ENCODE measurements at regions of chr2 and their contacts with region 1.

Region 1: DNA sequence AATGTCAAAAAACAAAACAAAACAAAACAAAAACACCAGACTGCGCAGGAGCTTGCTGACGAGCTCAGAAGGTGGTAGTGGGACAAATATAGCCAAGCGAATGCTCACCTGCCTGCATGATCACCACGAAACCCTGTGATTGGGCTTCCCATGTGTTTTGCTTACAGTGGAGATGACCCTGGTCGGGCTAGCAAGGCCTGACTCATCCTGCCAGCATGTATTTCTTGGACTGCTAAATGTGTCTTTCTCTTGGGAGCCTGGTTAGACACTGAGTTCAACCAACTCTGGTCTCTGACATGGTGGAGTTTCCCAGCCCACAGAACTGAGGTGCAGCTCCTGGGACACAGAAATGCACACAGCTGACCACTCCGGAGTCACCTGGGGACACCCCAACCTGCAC is 30.7 kb upstream of the DUSP2 start:
- DNase-seq: no peak
- H3K4me3 ChIP-seq: no peak overlapping the region
- H3K27ac ChIP-seq: no peak overlapping the region
- H3K4me1 ChIP-seq: peaks cover 4 to 23% (median 8%) of the 10 kb centered on the region in 6 donors
- H3K27me3 ChIP-seq: no peaks in the 10 kb centered on the region
- CTCF ChIP-seq: no peak
- POLR2A ChIP-seq: no peak

Region 2: GRCh38 chr2:96065381-96065930 is 110.5 kb before region 1 on chr2:
- intact Hi-C with region 1: no loop called
- DNase-seq: no peak
- H3K4me3 ChIP-seq: no peak overlapping the region
- H3K27ac ChIP-seq: no peak overlapping the region
- H3K4me1 ChIP-seq: peaks cover 0 to 15% (median 4%) of the 10 kb centered on the region in 6 donors
- H3K27me3 ChIP-seq: no peaks in the 10 kb centered on the region
- CTCF ChIP-seq: no peak
- POLR2A ChIP-seq: no peak

Region 3: DNA sequence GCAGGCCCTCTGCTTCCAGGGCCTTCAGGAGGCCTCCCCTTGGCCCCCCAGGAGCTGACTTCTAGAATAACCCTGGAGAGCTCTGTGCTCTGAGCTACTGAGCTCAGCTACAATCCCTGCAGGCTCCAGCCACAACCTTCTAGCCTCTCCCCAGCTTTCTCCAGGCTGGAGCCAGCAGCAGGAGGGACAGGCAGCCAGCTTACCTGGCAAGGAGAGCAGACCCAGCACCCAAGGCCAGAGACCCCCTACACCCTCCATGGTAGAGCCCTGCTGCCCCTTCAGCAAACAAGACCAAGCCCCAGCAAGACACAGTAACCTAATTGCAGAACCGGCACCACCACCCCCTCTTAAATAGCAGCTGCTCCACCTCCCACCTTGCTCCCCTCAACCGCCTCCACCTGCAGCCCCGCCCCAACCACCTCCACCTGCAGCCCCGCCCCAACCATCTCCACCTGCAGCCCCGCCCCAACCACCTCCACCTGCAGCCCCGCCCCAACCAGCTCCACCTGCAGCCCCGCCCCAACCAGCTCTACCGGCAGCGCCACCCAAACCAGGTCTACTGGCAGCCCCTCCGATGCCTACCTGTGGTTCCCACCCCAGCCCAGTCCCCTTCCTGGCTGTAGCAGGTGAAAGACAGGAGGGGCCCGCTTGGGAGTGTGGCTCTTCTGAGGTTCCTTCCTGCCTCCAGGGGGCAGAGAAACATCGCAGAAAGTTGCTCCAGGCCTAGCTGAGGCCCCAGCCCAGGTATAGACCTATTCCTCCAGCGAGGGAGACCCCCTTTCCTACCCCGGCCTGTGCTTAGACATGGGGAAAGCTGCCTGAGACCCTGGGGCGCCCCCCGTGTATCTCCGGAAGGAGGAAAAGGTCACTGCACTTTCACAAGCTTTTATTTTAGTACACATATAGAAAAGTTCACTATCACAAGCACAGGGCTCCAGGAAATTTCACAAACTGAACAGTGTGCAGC is 37.5 kb before region 1 on chr2 and contains the start of gene ASTL:
- intact Hi-C with region 1: loop called (anchors 2 kb)
- DNase-seq: peak; percentile 84
- H3K4me3 ChIP-seq: no peak within 1 kb of the TSS
- H3K27ac ChIP-seq: peak within 1 kb of the TSS in 3 of 8 donors; percentile 4 to 68 (median 28)
- H3K4me1 ChIP-seq: peaks cover 0 to 49% (median 20%) of the 10 kb centered on the region in 6 donors
- H3K27me3 ChIP-seq: no peaks in the 10 kb centered on the region
- CTCF ChIP-seq: peak; percentile 35 to 82 (median 68)
- POLR2A ChIP-seq: no peak
- total RNA-seq, gene ASTL: 0.49 to 2.2 (median 0.72) TPM in 6 of 7 donors, not detected in the other

Region 4: DNA sequence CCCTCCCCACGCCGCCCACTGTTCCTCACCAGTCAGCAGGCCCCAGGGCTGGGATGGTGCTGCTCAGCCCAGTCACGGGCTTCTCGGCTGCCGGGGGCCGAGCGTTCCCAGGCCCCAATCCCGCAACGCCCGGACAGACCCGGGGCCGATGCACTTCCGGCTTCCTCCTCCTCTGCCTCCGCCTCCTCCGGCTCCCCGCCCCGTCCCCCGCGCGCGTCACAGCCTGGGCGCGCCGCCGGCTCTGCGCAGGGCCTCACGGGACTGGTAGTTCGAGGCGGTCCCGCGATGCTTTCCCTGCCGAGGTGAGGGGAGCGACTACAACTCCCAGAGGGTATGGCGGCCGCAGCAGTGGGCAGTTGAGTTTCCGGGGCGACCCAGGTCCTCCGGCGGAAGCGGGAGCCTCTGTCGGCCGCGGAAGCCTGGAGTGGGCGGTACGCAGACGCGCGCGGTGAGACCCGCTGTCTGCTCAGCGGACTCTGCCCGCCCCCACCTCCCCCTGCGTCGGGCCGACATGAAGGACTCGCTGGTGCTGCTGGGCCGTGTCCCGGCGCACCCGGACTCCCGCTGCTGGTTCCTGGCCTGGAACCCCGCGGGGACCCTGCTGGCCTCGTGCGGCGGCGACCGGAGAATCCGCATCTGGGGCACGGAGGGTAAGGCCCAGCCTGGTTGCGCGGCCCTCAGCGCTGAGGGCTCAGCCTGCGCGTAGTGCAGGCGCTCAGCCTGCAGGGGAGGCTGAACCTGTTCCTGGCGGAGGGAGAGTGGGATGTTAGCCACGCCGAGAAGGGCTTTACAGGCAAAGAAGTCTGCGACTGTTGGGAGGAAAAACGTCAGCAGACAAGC is 90.1 kb after region 1 on chr2 and contains the starts of genes CIAO1 and TMEM127:
- intact Hi-C with region 1: no loop called
- DNase-seq: peak; percentile 100
- H3K4me3 ChIP-seq: peak within 1 kb of the TSS; percentile 83 to 98 (median 93)
- H3K27ac ChIP-seq: peak within 1 kb of the TSS; percentile 75 to 99 (median 94)
- H3K4me1 ChIP-seq: peaks cover 37 to 65% (median 56%) of the 10 kb centered on the region in 6 donors
- H3K27me3 ChIP-seq: no peaks in the 10 kb centered on the region
- CTCF ChIP-seq: peak; percentile 11 to 56 (median 28)
- POLR2A ChIP-seq: peak; percentile 54 to 74 (median 65)
- total RNA-seq, gene CIAO1: 63.9 to 122 (median 76.7) TPM
- total RNA-seq, gene TMEM127: 61.1 to 83.3 (median 70.0) TPM

Measured in spleen (tissue), 13 donors.